Activated CD8-positive, alpha-beta T cell treated with anti-CD3 and anti-CD28 coated beads for 36 hours (primary cell): ENCODE measurements at regions of chr20 and their contacts with region 1.

Region 1: DNA sequence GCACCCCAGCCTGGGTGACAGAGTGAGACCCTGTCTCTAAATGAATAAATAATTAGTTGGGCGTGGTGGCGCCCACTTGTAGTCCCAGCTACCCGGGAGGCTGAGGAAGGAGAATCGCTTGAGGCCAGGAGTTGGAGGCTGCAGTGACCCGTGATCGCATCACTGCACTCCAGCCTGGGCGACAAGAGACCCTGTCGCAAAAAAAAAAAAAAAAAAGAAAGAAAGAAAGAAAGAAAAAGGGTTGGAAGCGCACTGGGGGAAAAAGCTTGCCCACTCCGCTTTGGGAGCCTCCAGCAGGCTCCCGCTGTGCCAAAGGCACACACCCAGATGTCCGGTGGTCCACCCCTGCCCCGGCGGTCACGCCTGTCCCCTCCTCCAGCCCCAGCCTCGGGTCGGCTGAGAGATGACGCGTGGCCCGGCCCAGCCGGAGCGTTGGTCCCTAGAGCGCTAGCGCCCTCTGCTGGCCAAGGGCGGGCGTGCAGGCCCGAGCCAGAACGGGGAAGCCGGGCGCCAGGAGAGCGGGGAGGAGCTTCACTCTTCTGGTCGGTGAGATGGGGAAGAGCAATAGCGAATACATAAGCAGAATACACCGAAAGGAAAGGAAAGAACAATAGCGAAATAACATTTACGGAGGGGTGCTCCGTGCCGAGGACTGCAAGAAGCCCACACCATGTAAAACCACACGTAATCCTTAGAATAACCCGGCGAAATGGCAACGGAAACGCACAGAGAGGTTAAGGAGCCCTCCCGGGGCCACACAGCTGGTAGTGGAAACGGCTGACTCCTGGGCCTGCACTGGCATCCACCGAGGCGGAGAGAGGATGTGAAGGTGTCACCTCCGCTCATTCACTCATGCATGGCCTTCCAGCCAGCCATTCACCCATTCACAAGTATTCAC is 41.7 kb downstream of the UBE2V1 start:
- DNase-seq: peak; percentile 93
- ATAC-seq: peak; percentile 99
- H3K4me3 Mint-ChIP-seq: peak overlapping the region; percentile 61
- H3K27ac Mint-ChIP-seq: no peak overlapping the region
- H3K4me1 Mint-ChIP-seq: no peaks in the 10 kb centered on the region
- H3K27me3 Mint-ChIP-seq: no peaks in the 10 kb centered on the region
- CTCF ChIP-seq: peak; percentile 100

Region 2: GRCh38 chr20:49964964-49965780 is 106.1 kb before region 1 on chr20:
- CTCF ChIA-PET with region 1: interaction called, 45 read pairs
- POLR2A ChIA-PET with region 1: interaction called, 3 read pairs
- intact Hi-C with region 1: no loop called
- DNase-seq: peak; percentile 47
- ATAC-seq: peak; percentile 79
- H3K4me3 Mint-ChIP-seq: no peak overlapping the region
- H3K27ac Mint-ChIP-seq: no peak overlapping the region
- H3K4me1 Mint-ChIP-seq: no peaks in the 10 kb centered on the region
- H3K27me3 Mint-ChIP-seq: no peaks in the 10 kb centered on the region
- CTCF ChIP-seq: peak; percentile 68

Region 3: DNA sequence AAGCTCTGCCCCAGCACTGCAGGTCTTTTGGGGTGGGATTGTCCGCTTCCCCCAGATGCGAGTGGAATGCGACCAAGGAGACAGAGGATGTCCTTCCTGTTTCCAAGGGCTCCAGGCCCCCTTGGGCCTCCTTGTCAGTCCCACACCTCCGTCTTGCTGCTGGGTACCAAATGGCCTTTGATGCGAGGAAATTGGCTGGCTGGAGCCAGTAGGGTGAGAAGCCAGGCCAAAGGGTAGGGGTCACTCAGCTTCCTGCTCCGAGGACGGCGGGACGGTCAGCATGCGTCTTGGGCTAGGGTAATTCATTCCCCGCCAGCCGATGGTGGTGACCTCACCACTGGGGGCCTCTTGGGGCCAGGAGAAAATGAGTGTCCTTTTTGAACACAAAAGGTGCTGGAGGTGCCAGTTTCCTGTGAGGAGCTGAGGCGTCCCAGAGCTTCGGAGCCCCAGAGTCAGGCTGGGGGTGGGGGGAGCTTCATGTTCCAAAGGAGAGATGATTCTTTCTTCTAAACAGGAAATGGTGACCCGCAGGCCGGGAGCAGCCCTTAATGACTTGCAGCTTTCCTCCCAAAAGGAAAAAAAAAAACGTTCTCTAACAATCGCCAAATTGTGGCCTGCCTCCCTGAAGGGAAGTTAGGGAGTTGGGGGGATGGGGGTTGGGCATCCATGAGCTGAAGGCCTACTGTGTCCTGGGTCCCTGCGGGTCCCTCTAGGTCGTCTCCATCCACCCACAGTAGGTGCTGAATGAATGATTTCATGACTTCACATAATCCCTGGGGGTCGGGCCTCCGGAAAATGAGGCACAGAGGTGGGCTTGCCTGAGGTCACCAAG is 81.8 kb before region 1 on chr20:
- CTCF ChIA-PET with region 1: interaction called, 364 read pairs
- POLR2A ChIA-PET with region 1: interaction called, 3 read pairs
- intact Hi-C with region 1: no loop called
- DNase-seq: no peak
- ATAC-seq: no peak
- H3K4me3 Mint-ChIP-seq: no peak overlapping the region
- H3K27ac Mint-ChIP-seq: no peak overlapping the region
- H3K4me1 Mint-ChIP-seq: peaks cover 3% of the 10 kb centered on the region
- H3K27me3 Mint-ChIP-seq: peaks cover 2% of the 10 kb centered on the region
- CTCF ChIP-seq: no peak

Region 4: DNA sequence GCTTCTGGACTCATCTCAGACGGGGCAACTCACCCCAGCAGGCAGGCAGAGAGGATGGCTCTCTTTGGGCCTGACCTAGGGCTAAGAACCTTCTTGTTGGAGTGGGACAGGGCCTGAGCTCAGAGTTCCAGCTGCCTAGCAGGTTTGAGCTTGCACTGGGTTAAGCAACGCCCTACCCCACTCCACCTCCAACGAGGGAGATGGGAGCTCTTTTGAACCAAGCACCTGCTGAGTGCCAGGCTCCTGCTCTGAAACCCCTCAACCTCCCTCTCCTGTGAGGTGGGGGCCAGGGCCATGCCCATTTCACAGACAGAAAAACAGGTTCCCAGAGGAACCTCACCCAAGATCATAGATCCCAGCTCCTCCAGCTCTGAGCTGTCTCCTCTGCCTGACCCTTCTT is 34.1 kb before region 1 on chr20:
- CTCF ChIA-PET with region 1: interaction called, 16 read pairs
- POLR2A ChIA-PET with region 1: no interaction called
- intact Hi-C with region 1: no loop called
- DNase-seq: no peak
- ATAC-seq: no peak
- H3K4me3 Mint-ChIP-seq: no peak overlapping the region
- H3K27ac Mint-ChIP-seq: no peak overlapping the region
- H3K4me1 Mint-ChIP-seq: peaks cover 2% of the 10 kb centered on the region
- H3K27me3 Mint-ChIP-seq: no peaks in the 10 kb centered on the region
- CTCF ChIP-seq: no peak

Region 5: GRCh38 chr20:50095476-50096078 is 24.3 kb after region 1 on chr20:
- CTCF ChIA-PET with region 1: interaction called, 32 read pairs
- POLR2A ChIA-PET with region 1: no interaction called
- intact Hi-C with region 1: no loop called
- DNase-seq: no peak
- ATAC-seq: no peak
- H3K4me3 Mint-ChIP-seq: no peak overlapping the region
- H3K27ac Mint-ChIP-seq: peak overlapping the region; percentile 17
- H3K4me1 Mint-ChIP-seq: peaks cover 34% of the 10 kb centered on the region
- H3K27me3 Mint-ChIP-seq: no peaks in the 10 kb centered on the region
- CTCF ChIP-seq: no peak

Region 6: DNA sequence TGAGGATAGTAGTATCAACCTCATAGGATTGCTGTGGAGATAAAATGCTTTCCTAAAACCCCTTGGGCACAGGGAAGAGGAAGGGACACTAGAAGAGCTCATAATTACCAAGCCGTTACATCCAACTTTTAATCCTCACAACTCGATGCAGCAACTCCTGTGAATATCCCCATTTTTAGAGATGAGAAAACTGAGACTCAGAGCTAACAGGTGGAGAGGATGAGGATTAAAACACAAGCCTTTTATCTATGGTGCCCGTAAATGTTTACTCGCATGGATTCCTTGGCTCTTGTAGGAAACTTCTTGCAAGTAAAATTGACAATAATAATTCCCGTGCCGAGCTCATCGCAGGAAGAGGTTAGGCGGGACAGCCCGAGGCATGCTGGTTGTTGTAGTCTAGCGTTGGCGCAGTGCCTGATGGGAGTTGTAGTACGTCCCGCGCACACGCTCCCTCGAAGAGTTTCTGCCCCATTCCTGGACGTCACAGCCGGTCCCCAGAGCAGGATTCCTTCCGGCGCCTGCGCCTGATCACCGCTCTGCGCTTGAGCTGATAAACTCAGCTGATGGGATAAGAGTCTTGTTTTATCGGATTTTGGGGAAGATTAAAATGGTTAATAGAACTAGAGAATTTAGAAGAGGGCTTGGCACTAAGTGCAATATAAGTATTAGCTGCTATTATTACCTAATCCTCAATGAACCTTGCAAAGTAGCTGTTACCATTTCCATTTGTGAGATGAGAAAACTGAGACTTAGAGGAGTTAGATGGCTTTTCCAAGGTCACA is 44.5 kb after region 1 on chr20:
- CTCF ChIA-PET with region 1: interaction called, 30 read pairs
- POLR2A ChIA-PET with region 1: no interaction called
- intact Hi-C with region 1: no loop called
- DNase-seq: peak; percentile 96
- ATAC-seq: peak; percentile 79
- H3K4me3 Mint-ChIP-seq: peak overlapping the region; percentile 94
- H3K27ac Mint-ChIP-seq: peak overlapping the region; percentile 93
- H3K4me1 Mint-ChIP-seq: peaks cover 44% of the 10 kb centered on the region
- H3K27me3 Mint-ChIP-seq: no peaks in the 10 kb centered on the region
- CTCF ChIP-seq: no peak

Region 7: GRCh38 chr20:50179507-50180016 is 108.3 kb after region 1 on chr20:
- CTCF ChIA-PET with region 1: interaction called, 17 read pairs
- POLR2A ChIA-PET with region 1: no interaction called
- intact Hi-C with region 1: no loop called
- DNase-seq: no peak
- ATAC-seq: peak; percentile 20
- H3K4me3 Mint-ChIP-seq: no peak overlapping the region
- H3K27ac Mint-ChIP-seq: no peak overlapping the region
- H3K4me1 Mint-ChIP-seq: no peaks in the 10 kb centered on the region
- H3K27me3 Mint-ChIP-seq: peaks cover 5% of the 10 kb centered on the region
- CTCF ChIP-seq: peak; percentile 56